ENCODE measurements at regions of chr7 and their contacts with region 1.

Region 1: DNA sequence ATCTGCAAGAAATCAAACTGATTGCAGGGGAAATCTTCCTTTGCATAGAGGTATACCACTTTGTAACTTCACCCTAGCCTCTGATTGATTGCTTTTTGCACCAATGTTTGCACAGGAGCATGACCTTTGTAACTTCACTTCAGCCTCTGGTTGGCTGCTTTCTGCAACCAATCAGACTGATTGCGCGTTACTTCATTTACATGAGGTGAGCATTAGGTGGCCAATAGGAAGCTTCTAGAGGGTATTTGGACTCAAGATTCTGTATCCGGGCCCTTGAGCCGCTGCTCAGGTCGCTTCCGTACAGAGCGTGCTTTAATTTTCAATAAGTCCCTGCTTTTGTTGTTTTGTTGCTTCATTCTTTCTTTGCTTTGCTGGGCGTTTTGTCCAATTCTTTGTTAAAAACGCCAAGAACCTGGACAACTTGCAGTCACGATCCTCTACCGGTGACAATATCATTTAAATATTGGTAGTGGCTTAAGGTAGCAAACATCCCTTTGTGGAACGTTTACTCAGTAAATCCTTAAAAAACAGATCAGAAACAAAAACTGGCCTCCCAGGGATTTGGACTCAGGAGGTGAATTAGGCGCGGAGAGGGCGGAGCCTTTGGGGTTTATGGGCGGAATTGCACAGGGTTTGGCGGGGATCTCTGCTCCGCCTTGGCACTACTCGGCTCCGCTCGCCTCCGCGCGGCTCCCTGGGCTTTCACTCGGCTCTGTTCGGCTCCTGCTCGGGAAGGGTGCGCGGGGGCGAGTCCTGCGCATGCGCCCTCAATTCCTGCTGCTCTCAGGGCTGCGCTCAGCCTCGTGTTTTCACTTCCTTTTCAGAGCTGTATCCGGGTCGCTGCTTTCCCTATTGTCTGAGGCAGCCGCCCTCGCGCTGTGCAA is at the start of gene PHF14:
- DNase-seq: peak; percentile 97 to 98
- H3K4me3 ChIP-seq: peak within 1 kb of the TSS; percentile 89
- H3K4me3 Mint-ChIP-seq: peak within 1 kb of the TSS; percentile 89
- H3K27ac Mint-ChIP-seq: peak within 1 kb of the TSS; percentile 90
- H3K4me1 ChIP-seq: peaks cover 21% of the 10 kb centered on the region
- H3K4me1 Mint-ChIP-seq: peaks cover 9% of the 10 kb centered on the region
- H3K27me3 ChIP-seq: no peaks in the 10 kb centered on the region
- H3K27me3 Mint-ChIP-seq: peaks cover 3% of the 10 kb centered on the region
- CTCF ChIP-seq: no peak
- total RNA-seq, gene PHF14: 40.6 and 41.6 TPM in 2 replicates

Region 2: GRCh38 chr7:10939911-10940703 is 33.2 kb before region 1 on chr7:
- CTCF ChIA-PET with region 1: no interaction called
- POLR2A ChIA-PET with region 1: interaction called, 49 read pairs
- intact Hi-C with region 1: loop called (anchors 1 kb)
- DNase-seq: peak; percentile 93 to 96
- H3K4me3 ChIP-seq: peak overlapping the region; percentile 51
- H3K4me3 Mint-ChIP-seq: no peak overlapping the region
- H3K27ac Mint-ChIP-seq: no peak overlapping the region
- H3K4me1 ChIP-seq: peaks cover 3% of the 10 kb centered on the region; the same call in 1 of the 2 replicates
- H3K4me1 Mint-ChIP-seq: no peaks in the 10 kb centered on the region
- H3K27me3 ChIP-seq: no peaks in the 10 kb centered on the region
- H3K27me3 Mint-ChIP-seq: no peaks in the 10 kb centered on the region
- CTCF ChIP-seq: no peak

Region 3: DNA sequence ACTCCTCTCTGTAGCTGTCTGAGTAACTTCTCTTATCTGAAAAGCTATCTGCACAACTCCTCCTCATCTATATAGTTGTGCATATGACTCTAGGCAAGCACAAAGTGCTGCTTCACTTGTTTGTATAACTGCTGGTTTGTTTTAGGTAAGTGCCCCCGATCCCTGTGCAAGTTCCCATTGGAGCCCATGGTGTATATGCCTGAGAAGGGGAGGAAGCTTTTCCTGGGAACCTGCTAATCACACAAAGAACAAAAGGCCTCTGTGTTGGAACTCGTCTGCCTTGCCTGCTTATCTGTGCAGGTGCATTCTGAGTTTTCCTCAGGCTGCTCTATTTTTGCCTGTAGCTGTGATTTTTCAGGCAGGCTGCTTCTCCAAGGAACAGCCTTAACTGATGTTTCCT is 22.8 kb before region 1 on chr7:
- CTCF ChIA-PET with region 1: no interaction called
- POLR2A ChIA-PET with region 1: interaction called, 3 read pairs
- intact Hi-C with region 1: loop called (anchors 2 kb)
- DNase-seq: peak in 1 of 2 experiments; percentile 36
- H3K4me3 ChIP-seq: no peak overlapping the region
- H3K4me3 Mint-ChIP-seq: no peak overlapping the region
- H3K27ac Mint-ChIP-seq: no peak overlapping the region
- H3K4me1 ChIP-seq: no peaks in the 10 kb centered on the region
- H3K4me1 Mint-ChIP-seq: peaks cover 16% of the 10 kb centered on the region
- H3K27me3 ChIP-seq: no peaks in the 10 kb centered on the region
- H3K27me3 Mint-ChIP-seq: peaks cover 2% of the 10 kb centered on the region
- CTCF ChIP-seq: no peak

Region 4: GRCh38 chr7:11082552-11083213 is 109.4 kb after region 1 on chr7:
- CTCF ChIA-PET with region 1: no interaction called
- POLR2A ChIA-PET with region 1: no interaction called
- intact Hi-C with region 1: loop called (anchors 1 kb)
- DNase-seq: peak; percentile 68 to 75
- H3K4me3 ChIP-seq: no peak overlapping the region
- H3K4me3 Mint-ChIP-seq: peak overlapping the region; percentile 42
- H3K27ac Mint-ChIP-seq: peak overlapping the region; percentile 92
- H3K4me1 ChIP-seq: peaks cover 20% of the 10 kb centered on the region
- H3K4me1 Mint-ChIP-seq: peaks cover 10% of the 10 kb centered on the region
- H3K27me3 ChIP-seq: no peaks in the 10 kb centered on the region
- H3K27me3 Mint-ChIP-seq: no peaks in the 10 kb centered on the region
- CTCF ChIP-seq: no peak

Region 5: DNA sequence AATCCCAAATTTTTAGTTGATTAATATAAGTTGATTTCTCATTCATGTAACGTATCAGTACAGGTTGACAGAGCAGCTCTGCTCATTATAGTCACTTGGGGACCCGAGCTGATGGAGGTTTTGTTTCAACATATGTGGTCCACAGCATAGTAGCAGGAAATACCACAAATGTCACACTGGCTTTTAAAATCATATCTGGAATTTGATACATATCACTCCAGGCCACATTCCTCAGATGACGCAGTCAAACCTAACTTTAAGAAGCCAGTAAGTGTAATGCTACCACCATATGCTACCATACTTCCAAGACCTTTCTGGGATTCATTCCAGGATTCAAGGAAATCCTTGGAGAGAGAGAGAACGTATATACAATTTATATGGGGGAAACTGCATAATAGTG is 156.7 kb after region 1 on chr7:
- CTCF ChIA-PET with region 1: no interaction called
- POLR2A ChIA-PET with region 1: no interaction called
- intact Hi-C with region 1: no loop called
- DNase-seq: no peak
- H3K4me3 ChIP-seq: no peak overlapping the region
- H3K4me3 Mint-ChIP-seq: no peak overlapping the region
- H3K27ac Mint-ChIP-seq: no peak overlapping the region
- H3K4me1 ChIP-seq: no peaks in the 10 kb centered on the region
- H3K4me1 Mint-ChIP-seq: no peaks in the 10 kb centered on the region
- H3K27me3 ChIP-seq: no peaks in the 10 kb centered on the region
- H3K27me3 Mint-ChIP-seq: no peaks in the 10 kb centered on the region
- CTCF ChIP-seq: no peak

Region 6: DNA sequence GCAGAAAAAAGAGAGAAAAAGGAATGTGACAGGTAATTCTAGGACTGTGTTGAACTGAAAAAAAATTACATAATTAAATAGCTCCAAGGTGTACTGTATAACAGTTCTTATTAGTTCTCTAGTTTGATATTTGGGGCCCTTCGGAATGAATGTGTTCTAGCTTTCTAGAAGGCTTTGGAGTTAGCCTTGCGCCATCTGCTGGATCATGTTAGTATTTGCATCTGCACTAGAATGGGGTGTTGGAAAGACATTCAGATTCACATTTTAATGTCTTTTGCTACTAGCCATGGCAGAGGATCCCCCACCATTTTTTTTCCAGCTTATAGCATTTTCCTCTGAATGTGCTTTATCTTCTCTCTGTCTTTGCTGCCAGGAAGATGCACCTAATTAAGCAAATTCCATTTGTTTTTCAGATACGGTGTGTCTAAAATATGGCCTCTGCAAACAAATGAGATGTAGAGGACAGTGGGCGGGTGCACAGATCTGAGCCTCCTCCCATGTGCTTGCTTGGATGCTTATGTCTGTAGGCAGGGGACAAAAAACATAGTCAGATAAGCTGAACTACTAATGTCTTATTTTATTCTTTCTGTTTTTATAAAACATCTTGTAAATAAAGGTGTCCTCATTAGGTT is 238.9 kb after region 1 on chr7:
- CTCF ChIA-PET with region 1: no interaction called
- POLR2A ChIA-PET with region 1: interaction called, 3 read pairs
- intact Hi-C with region 1: loop called (anchors 1 kb)
- DNase-seq: peak; percentile 56 to 59
- H3K4me3 ChIP-seq: no peak overlapping the region
- H3K4me3 Mint-ChIP-seq: no peak overlapping the region
- H3K27ac Mint-ChIP-seq: no peak overlapping the region
- H3K4me1 ChIP-seq: 0 out of 2 replicates have a peak, but pooled peaks cover 7% of the 10 kb centered on the region
- H3K4me1 Mint-ChIP-seq: no peaks in the 10 kb centered on the region
- H3K27me3 ChIP-seq: no peaks in the 10 kb centered on the region
- H3K27me3 Mint-ChIP-seq: no peaks in the 10 kb centered on the region
- CTCF ChIP-seq: peak; percentile 71 to 82

Measured in Caco-2 (cell line).